Activated CD8-positive, alpha-beta T cell treated with anti-CD3 and anti-CD28 coated beads, Interleukin-2, amount 10 ng/mL, durations not matched to agents 7 days and 5 days (primary cell): ENCODE measurements at regions of chr6 and their contacts with region 1.

Region 1: DNA sequence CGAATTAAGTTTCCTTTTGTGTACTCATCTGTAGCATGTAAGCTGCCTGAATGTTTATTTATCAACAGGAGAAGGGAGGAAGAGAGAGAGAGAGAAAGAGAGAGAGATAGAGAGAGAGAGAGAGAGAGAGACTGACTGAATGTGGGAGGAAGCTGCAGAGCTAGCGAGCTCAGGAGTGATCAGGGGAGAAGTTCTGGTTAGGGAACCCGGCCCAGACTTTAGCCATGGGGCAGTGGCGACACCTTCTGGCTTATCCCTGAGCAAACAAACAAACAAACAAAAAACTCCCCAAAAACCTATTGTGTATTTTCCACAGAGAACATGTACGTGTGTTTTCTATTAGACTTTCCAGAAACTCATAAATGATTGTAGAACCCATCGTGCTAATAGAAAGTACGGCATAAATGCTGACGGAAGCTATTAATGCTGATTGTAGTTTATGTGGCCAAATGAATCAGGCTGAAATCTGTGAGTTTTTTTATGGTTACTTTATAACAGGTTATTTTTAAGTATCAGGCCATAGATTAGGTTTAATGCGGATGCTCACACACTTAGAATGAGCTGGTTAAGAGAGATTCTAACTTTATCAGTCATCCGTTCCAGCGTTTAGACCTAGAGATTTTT is 92.8 kb downstream of the CLIC5 start:
- DNase-seq: peak; percentile 73
- ATAC-seq: peak; percentile 63
- H3K4me3 Mint-ChIP-seq: no peak overlapping the region
- H3K27ac Mint-ChIP-seq: no peak overlapping the region
- H3K4me1 Mint-ChIP-seq: peaks cover 20% of the 10 kb centered on the region
- H3K27me3 Mint-ChIP-seq: no peaks in the 10 kb centered on the region

Region 2: GRCh38 chr6:44630125-44631028 is 1292.5 kb before region 1 on chr6:
- CTCF ChIA-PET with region 1: interaction called, 21 read pairs
- POLR2A ChIA-PET with region 1: no interaction called
- DNase-seq: peak; percentile 40
- ATAC-seq: peak; percentile 67
- H3K4me3 Mint-ChIP-seq: no peak overlapping the region
- H3K27ac Mint-ChIP-seq: no peak overlapping the region
- H3K4me1 Mint-ChIP-seq: peaks cover 7% of the 10 kb centered on the region
- H3K27me3 Mint-ChIP-seq: peaks cover 8% of the 10 kb centered on the region

Region 3: GRCh38 chr6:45421709-45422502 is 500.9 kb before region 1 on chr6:
- CTCF ChIA-PET with region 1: interaction called, 13 read pairs
- POLR2A ChIA-PET with region 1: no interaction called
- DNase-seq: peak; percentile 57
- ATAC-seq: peak; percentile 38
- H3K4me3 Mint-ChIP-seq: peak overlapping the region; percentile 88
- H3K27ac Mint-ChIP-seq: peak overlapping the region; percentile 82
- H3K4me1 Mint-ChIP-seq: peaks cover 37% of the 10 kb centered on the region
- H3K27me3 Mint-ChIP-seq: peaks cover 38% of the 10 kb centered on the region

Region 4: GRCh38 chr6:45942953-45943352 is 20.1 kb after region 1 on chr6:
- CTCF ChIA-PET with region 1: no interaction called
- POLR2A ChIA-PET with region 1: no interaction called
- DNase-seq: no peak
- ATAC-seq: no peak
- H3K4me3 Mint-ChIP-seq: no peak overlapping the region
- H3K27ac Mint-ChIP-seq: no peak overlapping the region
- H3K4me1 Mint-ChIP-seq: peaks cover 9% of the 10 kb centered on the region
- H3K27me3 Mint-ChIP-seq: no peaks in the 10 kb centered on the region